CD4-positive, alpha-beta T cell (primary cell): ENCODE measurements at regions of chr10 and their contacts with region 1.

Region 1: DNA sequence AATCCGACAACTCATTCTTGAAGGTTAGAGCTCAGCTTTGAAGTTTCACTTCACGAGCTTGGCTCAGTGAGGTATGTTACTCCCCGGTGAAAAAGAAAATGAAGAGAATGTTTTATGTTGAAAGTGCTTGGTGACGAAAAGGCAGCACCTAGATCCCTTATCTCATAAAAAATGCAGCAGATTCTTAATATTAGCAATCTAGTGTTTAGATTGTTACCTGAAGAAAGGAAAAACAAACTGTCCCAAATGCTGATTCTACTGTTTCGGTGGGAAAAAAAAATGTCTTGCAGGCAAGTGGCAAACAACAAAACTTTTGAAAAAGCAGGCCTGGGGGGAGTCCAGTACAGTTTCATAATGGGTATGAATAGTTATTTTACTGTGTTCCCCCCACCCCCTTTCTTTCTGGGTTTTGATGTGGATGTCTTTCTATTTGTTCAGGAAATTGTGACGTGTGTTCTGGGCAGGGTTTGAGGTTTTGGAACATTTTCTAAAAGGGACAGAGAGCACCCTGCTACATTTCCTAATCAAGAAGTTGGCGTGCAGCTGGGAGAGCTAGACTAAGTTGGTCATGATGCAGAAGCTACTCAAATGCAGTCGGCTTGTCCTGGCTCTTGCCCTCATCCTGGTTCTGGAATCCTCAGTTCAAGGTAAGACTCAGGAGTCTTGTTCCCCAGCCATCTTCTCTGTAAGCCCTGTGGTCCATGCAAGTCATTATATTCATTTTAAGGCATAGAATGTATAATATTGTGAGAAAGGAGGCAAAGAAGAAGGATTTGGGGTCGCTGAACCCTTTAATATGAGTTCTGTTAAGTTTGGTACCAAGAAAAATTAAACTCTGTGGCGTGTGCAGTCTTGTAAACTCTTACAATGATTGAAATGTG is at the start of gene SRGN:
- DNase-seq: peak; percentile 52 to 97 (median 60)
- ATAC-seq: peak; percentile 56
- H3K4me3 ChIP-seq: peak within 1 kb of the TSS; percentile 59
- H3K4me3 Mint-ChIP-seq: peak within 1 kb of the TSS; percentile 88
- H3K27ac ChIP-seq: peak within 1 kb of the TSS; percentile 94 to 98
- H3K27ac Mint-ChIP-seq: peak within 1 kb of the TSS; percentile 94
- H3K4me1 ChIP-seq: peaks cover 52% of the 10 kb centered on the region
- H3K4me1 Mint-ChIP-seq: peaks cover 62% of the 10 kb centered on the region
- H3K27me3 ChIP-seq: no peaks in the 10 kb centered on the region
- H3K27me3 Mint-ChIP-seq: no peaks in the 10 kb centered on the region
- CTCF ChIP-seq: no peak
- total RNA-seq, gene SRGN: 342 to 353 TPM

Region 2: DNA sequence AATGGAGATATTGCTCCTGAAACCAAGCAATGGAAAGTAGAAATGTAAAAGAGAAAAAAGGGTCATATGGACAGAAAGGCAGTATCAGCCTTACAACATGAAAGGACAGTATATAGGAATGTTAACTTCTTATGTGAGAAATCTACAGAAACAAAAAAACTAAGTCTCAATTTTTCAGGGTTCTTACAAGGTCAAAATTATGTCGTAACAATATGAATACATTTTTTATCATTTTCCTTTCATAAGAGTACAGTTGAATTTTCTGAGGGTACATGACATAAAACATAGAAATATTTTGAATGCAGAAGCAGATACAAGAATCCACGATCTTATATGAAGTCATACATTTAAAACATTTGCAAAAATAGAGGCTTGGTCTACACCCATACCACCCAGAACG is 626.8 kb before region 1 on chr10:
- CTCF ChIA-PET with region 1: no interaction called
- POLR2A ChIA-PET with region 1: no interaction called
- intact Hi-C with region 1: no loop called
- DNase-seq: no peak
- ATAC-seq: no peak
- H3K4me3 ChIP-seq: no peak overlapping the region
- H3K4me3 Mint-ChIP-seq: no peak overlapping the region
- H3K27ac ChIP-seq: no peak overlapping the region
- H3K27ac Mint-ChIP-seq: no peak overlapping the region
- H3K4me1 ChIP-seq: no peaks in the 10 kb centered on the region
- H3K4me1 Mint-ChIP-seq: no peaks in the 10 kb centered on the region
- H3K27me3 ChIP-seq: no peaks in the 10 kb centered on the region
- H3K27me3 Mint-ChIP-seq: no peaks in the 10 kb centered on the region
- CTCF ChIP-seq: no peak

Region 3: GRCh38 chr10:69045441-69046300 is 42.2 kb before region 1 on chr10:
- CTCF ChIA-PET with region 1: no interaction called
- POLR2A ChIA-PET with region 1: interaction called, 38 read pairs
- intact Hi-C with region 1: loop called (anchors 1 to 5 kb)
- DNase-seq: peak in 10 of 14 experiments; percentile 10 to 78 (median 22)
- ATAC-seq: peak; percentile 83
- H3K4me3 ChIP-seq: no peak overlapping the region
- H3K4me3 Mint-ChIP-seq: peak overlapping the region; percentile 69
- H3K27ac ChIP-seq: peak overlapping the region; percentile 60 to 72
- H3K27ac Mint-ChIP-seq: peak overlapping the region; percentile 93
- H3K4me1 ChIP-seq: peaks cover 52% of the 10 kb centered on the region
- H3K4me1 Mint-ChIP-seq: peaks cover 31% of the 10 kb centered on the region
- H3K27me3 ChIP-seq: no peaks in the 10 kb centered on the region
- H3K27me3 Mint-ChIP-seq: no peaks in the 10 kb centered on the region
- CTCF ChIP-seq: no peak

Region 4: GRCh38 chr10:69055241-69055640 is 32.6 kb before region 1 on chr10:
- CTCF ChIA-PET with region 1: no interaction called
- POLR2A ChIA-PET with region 1: no interaction called
- intact Hi-C with region 1: loop called in 1 of 2 experiments (anchors 1 kb)
- DNase-seq: peak in 1 of 14 experiments; percentile 38
- ATAC-seq: peak; percentile 50
- H3K4me3 ChIP-seq: no peak overlapping the region
- H3K4me3 Mint-ChIP-seq: no peak overlapping the region
- H3K27ac ChIP-seq: no peak overlapping the region
- H3K27ac Mint-ChIP-seq: peak overlapping the region; percentile 32
- H3K4me1 ChIP-seq: peaks cover 27% of the 10 kb centered on the region
- H3K4me1 Mint-ChIP-seq: peaks cover 54% of the 10 kb centered on the region
- H3K27me3 ChIP-seq: no peaks in the 10 kb centered on the region
- H3K27me3 Mint-ChIP-seq: no peaks in the 10 kb centered on the region
- CTCF ChIP-seq: no peak

Region 5: GRCh38 chr10:69061305-69062161 is 26.3 kb before region 1 on chr10:
- CTCF ChIA-PET with region 1: no interaction called
- POLR2A ChIA-PET with region 1: interaction called, 11 read pairs
- intact Hi-C with region 1: loop called in 1 of 2 experiments (anchors 2 kb)
- DNase-seq: peak in 12 of 14 experiments; percentile 7 to 74 (median 39)
- ATAC-seq: peak; percentile 82
- H3K4me3 ChIP-seq: peak overlapping the region; percentile 40
- H3K4me3 Mint-ChIP-seq: peak overlapping the region; percentile 82
- H3K27ac ChIP-seq: peak overlapping the region in 1 of 2 donors; percentile 65
- H3K27ac Mint-ChIP-seq: peak overlapping the region; percentile 66
- H3K4me1 ChIP-seq: peaks cover 43% of the 10 kb centered on the region
- H3K4me1 Mint-ChIP-seq: peaks cover 45% of the 10 kb centered on the region
- H3K27me3 ChIP-seq: no peaks in the 10 kb centered on the region
- H3K27me3 Mint-ChIP-seq: no peaks in the 10 kb centered on the region
- CTCF ChIP-seq: no peak